Upper lobe of right lung (tissue), 1 donor: ENCODE measurements at regions of chr15 and their contacts with region 1.

Region 1: GRCh38 chr15:79184465-79184892 is 93.9 kb upstream of the RASGRF1 start:
- DNase-seq: peak; percentile 78
- ATAC-seq: peak; percentile 79
- H3K4me3 ChIP-seq: no peak overlapping the region
- H3K27ac ChIP-seq: no peak overlapping the region
- H3K4me1 ChIP-seq: no peaks in the 10 kb centered on the region
- H3K27me3 ChIP-seq: no peaks in the 10 kb centered on the region
- CTCF ChIP-seq: peak; percentile 99

Region 2: DNA sequence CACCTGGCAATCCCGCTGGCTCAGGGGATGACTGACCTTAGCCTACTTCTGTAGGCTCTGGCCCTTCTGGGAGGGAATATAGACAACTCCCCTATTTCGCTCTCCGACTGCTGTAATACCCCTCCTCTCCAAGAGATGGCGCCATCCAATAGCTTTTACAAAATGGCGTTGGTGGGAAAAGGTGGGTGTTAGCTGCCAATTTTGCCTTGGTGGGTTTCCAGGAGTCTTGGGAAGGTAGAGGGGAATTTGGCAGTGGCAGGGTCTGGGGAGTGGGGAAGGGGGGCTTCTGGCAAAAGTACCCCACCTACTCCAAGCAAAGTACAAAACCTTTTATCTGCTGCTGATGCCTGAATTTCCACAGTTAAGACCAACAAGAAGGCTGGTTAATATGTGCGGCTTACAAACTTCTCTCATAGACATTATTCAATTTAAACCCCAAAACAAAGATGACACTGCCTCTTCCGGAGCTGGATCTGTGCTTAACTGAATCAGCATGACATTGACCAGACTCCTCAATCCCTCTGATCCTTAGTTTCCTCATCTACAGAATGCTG is 156.0 kb before region 1 on chr15:
- intact Hi-C with region 1: loop called (anchors 10 kb)
- DNase-seq: no peak
- ATAC-seq: peak; percentile 51
- H3K4me3 ChIP-seq: no peak overlapping the region
- H3K27ac ChIP-seq: no peak overlapping the region
- H3K4me1 ChIP-seq: no peaks in the 10 kb centered on the region
- H3K27me3 ChIP-seq: no peaks in the 10 kb centered on the region
- CTCF ChIP-seq: peak; percentile 75